Common myeloid progenitor, CD34-positive (primary cell): ENCODE measurements at regions of chr17 and their contacts with region 1.

Region 1: GRCh38 chr17:35747540-35748017 is 5.5 kb downstream of the GAS2L2 start:
- DNase-seq: peak; percentile 81 to 91 (median 86)
- H3K4me3 ChIP-seq: no peak overlapping the region
- H3K27ac ChIP-seq: no peak overlapping the region
- H3K4me1 ChIP-seq: peaks cover 0 to 40% (median 30%) of the 10 kb centered on the region in 4 experiments
- H3K27me3 ChIP-seq: peaks cover 0 to 11% (median 0%) of the 10 kb centered on the region in 5 experiments

Region 2: GRCh38 chr17:35607239-35607847 is 140.2 kb before region 1 on chr17:
- CTCF ChIA-PET with region 1: interaction called, 131 read pairs
- POLR2A ChIA-PET with region 1: interaction called, 3 read pairs
- DNase-seq: no peak
- H3K4me3 ChIP-seq: no peak overlapping the region
- H3K27ac ChIP-seq: no peak overlapping the region
- H3K4me1 ChIP-seq: no peaks in the 10 kb centered on the region
- H3K27me3 ChIP-seq: no peaks in the 10 kb centered on the region

Region 3: GRCh38 chr17:35731239-35731931 is 16.2 kb before region 1 on chr17 and contains the start of gene RASL10B:
- CTCF ChIA-PET with region 1: interaction called, 18 read pairs
- POLR2A ChIA-PET with region 1: no interaction called
- DNase-seq: peak in 2 of 3 donors; percentile 53 to 66
- H3K4me3 ChIP-seq: peak within 1 kb of the TSS; percentile 41 to 82 (median 62)
- H3K27ac ChIP-seq: no peak within 1 kb of the TSS
- H3K4me1 ChIP-seq: peaks cover 0 to 16% (median 10%) of the 10 kb centered on the region in 4 experiments
- H3K27me3 ChIP-seq: no peaks in the 10 kb centered on the region

Region 4: DNA sequence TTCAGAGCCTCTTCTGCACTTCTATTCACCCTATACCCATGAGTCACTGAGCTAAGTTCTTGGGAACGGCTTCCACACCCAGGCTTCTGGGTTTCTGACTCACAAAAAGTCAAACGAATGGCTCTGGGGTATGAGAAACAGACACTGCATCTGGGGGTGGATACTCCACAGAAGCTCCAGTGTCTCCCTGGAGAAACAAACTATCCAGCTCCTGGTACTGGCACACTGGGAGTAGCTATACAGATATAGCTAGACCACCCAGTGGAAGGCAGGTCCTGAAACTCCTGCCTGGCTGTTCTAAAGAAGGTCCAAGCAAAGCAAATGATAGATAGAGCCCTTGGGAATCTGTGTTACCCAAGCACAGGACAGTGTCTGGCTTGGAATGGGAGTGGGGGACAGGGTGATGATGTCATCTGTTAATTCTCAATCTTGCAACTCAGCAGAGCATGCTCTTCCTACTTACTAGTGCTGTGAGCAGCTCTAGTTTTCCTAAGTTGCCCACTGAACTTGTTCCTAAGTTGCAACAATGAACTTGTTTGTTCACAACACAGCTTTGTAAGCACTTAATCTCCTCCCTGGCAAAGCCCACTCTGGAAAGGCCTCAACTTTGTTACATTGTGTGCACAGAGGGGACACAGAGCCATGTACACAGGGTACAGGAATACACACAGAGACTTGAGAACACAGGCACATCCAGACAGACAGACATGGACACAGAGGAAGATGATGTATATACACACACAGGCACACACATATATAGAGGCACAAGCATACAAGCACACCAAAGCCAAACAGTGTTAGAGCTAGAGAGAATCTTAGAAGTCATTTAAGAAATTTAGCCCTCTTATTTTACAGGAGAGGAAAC is 41.2 kb after region 1 on chr17:
- CTCF ChIA-PET with region 1: no interaction called
- POLR2A ChIA-PET with region 1: no interaction called
- DNase-seq: no peak
- H3K4me3 ChIP-seq: peak overlapping the region in 1 of 7 experiments; percentile 25
- H3K27ac ChIP-seq: no peak overlapping the region
- H3K4me1 ChIP-seq: peaks cover 6 to 30% (median 16%) of the 10 kb centered on the region in 4 experiments
- H3K27me3 ChIP-seq: no peaks in the 10 kb centered on the region

Region 5: DNA sequence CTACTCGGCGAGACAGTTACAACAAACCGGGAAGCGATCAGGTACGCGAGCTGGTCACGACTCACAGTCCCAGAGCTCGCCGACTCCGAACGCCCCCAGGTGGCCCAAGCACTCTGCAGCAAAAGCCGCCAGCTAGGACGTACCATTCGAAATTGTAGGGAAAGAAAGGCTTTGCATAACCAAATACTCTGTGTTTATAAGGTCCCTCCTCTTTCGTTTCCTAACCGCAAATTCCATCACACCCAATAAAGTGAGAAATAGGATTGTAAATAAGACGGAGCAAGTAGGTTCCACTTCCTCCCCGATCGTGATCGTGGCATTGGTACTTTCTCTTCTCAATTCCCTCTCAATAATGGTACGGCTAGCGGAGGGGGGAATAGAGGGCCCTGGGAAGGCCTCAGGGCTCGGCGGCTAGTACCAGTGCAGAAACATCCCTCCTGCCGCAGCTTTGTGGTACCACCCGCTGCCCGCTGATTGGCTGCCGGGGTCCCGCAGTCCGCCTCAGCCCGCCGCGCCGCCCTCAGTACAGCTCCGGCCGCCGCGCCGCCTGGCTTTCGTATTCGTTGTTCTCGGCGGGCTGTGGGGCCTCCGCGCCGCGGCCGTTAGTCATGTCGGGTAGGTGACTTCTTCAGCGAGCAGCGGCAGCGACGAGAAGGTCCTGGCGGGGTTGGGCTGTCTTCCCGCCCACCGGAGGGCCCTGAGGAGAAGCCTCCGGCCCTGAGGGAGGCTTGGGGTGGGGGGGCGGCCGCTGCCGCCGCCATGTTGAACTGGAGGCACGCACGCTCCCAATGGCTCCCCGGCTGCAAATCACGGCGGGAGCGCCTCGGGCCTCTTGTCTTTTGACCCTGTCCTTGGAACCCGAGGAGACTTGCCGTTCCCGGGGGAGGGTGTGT is 61.6 kb after region 1 on chr17 and contains the start of gene TAF15:
- CTCF ChIA-PET with region 1: interaction called, 10 read pairs
- POLR2A ChIA-PET with region 1: no interaction called
- DNase-seq: peak; percentile 99
- H3K4me3 ChIP-seq: peak within 1 kb of the TSS; percentile 87 to 99 (median 93)
- H3K27ac ChIP-seq: peak within 1 kb of the TSS; percentile 94 to 97
- H3K4me1 ChIP-seq: peaks cover 13 to 52% (median 38%) of the 10 kb centered on the region in 4 experiments
- H3K27me3 ChIP-seq: no peaks in the 10 kb centered on the region